ENCODE measurements at regions of chr20 and their contacts with region 1.

Region 1: GRCh38 chr20:38635721-38636288 is 34.2 kb downstream of the ARHGAP40 start:
- DNase-seq: no peak
- H3K4me3 ChIP-seq: no peak overlapping the region
- H3K27ac ChIP-seq: no peak overlapping the region
- H3K4me1 ChIP-seq: no peaks in the 10 kb centered on the region
- H3K27me3 ChIP-seq: peaks cover 21% of the 10 kb centered on the region
- CTCF ChIP-seq: no peak
- EP300 ChIP-seq: no peak
- POLR2A ChIP-seq: no peak

Region 2: DNA sequence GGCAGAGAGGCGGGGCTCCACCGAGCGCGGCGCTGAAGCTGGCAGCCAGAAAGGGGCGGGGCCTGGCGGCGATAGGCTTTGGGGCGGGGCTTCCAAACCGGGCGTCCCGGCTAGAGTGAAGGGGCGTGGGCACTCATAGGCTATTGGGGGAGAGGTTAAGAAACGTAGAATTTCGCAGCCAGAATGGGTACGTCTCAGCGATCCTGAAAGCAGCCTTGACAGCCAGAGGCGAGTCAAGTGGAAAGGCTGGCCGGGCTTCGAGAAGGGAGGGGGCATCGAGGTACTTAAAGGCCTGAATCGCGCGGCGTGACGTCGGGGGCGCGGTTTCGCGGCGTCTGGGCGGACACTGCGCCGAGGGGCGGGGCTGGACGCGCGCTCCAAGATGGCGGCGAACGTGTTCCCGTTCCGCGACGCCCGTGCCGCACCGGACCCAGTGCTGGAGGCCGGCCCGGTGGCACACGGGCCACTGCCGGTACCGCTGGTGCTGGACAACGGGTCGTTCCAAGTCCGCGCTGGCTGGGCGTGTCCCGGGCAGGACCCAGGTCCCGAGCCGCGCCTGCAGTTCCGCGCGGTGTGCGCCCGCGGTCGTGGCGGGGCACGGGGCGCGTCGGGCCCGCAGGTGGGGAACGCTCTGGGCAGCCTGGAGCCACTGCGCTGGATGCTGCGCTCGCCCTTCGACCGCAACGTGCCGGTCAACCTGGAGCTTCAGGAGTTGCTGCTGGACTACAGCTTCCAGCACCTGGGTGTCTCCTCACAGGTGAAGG is 112.5 kb after region 1 on chr20 and contains the start of gene ACTR5:
- in situ Hi-C with region 1: loop called in 3 of 4 experiments (anchors 10 kb)
- intact Hi-C with region 1: loop called (anchors 5 kb)
- DNase-seq: peak; percentile 97
- H3K4me3 ChIP-seq: peak within 1 kb of the TSS; percentile 55 to 98 (median 90)
- H3K27ac ChIP-seq: peak within 1 kb of the TSS; percentile 85 to 90 (median 89)
- H3K4me1 ChIP-seq: peaks cover 6 to 18% (median 14%) of the 10 kb centered on the region in 4 donors
- H3K27me3 ChIP-seq: peaks cover 5% of the 10 kb centered on the region
- CTCF ChIP-seq: no peak
- EP300 ChIP-seq: no peak
- POLR2A ChIP-seq: peak; percentile 52
- total RNA-seq, gene ACTR5: 7.2 to 21.3 (median 11.4) TPM